GM12878 (cell line): ENCODE measurements at regions of chrX and their contacts with region 1.

Region 1: DNA sequence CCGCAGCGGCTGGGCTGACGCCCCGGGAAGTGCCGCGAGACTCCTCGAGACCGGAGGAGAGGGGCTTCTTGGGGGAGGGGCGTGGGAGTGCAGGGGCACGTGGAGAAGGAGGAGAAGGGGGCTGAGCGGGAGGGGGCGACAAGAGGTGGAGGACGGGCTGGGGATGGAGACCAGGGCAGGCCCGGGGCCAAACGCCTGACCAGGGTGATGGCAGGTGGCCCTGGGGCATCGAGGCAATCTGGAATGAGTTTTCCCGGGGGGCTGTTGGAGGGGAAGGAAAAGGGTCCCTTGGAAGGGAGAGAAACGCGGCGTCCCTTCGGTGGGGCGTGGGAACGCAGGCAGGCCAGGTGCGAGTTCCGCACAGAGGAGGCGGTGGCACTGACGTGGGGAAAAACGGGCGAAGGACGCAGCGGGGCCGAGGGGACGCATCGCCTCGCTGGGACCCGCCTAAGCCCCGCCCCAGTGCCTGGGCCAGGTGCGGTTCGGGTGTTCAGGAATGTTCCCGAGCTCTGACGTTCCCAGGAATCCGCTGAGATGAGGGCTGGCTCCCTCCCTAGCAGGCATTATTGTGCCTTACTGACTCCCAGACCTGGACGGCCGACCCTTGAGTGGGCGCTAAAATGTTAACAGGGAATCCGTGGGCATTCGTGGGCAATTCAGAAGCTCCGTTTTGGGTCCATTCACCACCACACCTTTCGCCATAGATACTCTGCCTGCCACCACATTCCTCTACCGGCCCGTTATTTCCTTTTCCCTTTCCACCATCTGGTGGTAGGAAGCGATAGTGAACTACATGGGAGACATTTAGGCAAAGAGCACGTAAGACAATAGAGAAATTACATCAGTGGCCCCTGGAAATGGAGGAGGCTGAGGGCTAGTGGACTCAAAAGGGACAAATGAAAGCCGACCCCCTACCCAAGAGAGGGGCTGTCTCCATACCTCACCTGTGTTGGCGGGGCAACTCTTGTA is 795 bp upstream of the SH3KBP1 start:
- DNase-seq: no peak
- ATAC-seq: peak; percentile 10
- H3K4me3 ChIP-seq: peak overlapping the region; percentile 58; the same call in 1 of the 2 replicates
- H3K27ac ChIP-seq: peak overlapping the region; percentile 69
- H3K4me1 ChIP-seq: peaks cover 9% of the 10 kb centered on the region; the same call in 1 of the 2 replicates
- H3K27me3 ChIP-seq: no peaks in the 10 kb centered on the region
- CTCF ChIP-seq: peak; percentile 15 to 60 (median 33); a peak in 4 of 6 replicates
- EP300 ChIP-seq: no peak
- POLR2A ChIP-seq: peak; percentile 54
- RAD21 ChIP-seq: peak; percentile 73

Region 2: GRCh38 chrX:19593690-19594089 is 294.5 kb before region 1 on chrX:
- CTCF ChIA-PET with region 1: interaction called, 4 read pairs
- POLR2A ChIA-PET with region 1: no interaction called
- RAD21 ChIA-PET with region 1: interaction called, 3 read pairs
- SMC1A ChIA-PET with region 1: interaction called, 4 read pairs
- in situ Hi-C with region 1: no loop called
- intact Hi-C with region 1: loop called (anchors 10 kb)
- DNase-seq: no peak
- ATAC-seq: peak; percentile 71
- H3K4me3 ChIP-seq: no peak overlapping the region
- H3K27ac ChIP-seq: no peak overlapping the region
- H3K4me1 ChIP-seq: no peaks in the 10 kb centered on the region
- H3K27me3 ChIP-seq: no peaks in the 10 kb centered on the region
- CTCF ChIP-seq: peak in 2 of 3 experiments; percentile 16 to 40; a peak in 4 of 6 replicates
- EP300 ChIP-seq: no peak
- POLR2A ChIP-seq: no peak
- RAD21 ChIP-seq: peak; percentile 62

Region 3: DNA sequence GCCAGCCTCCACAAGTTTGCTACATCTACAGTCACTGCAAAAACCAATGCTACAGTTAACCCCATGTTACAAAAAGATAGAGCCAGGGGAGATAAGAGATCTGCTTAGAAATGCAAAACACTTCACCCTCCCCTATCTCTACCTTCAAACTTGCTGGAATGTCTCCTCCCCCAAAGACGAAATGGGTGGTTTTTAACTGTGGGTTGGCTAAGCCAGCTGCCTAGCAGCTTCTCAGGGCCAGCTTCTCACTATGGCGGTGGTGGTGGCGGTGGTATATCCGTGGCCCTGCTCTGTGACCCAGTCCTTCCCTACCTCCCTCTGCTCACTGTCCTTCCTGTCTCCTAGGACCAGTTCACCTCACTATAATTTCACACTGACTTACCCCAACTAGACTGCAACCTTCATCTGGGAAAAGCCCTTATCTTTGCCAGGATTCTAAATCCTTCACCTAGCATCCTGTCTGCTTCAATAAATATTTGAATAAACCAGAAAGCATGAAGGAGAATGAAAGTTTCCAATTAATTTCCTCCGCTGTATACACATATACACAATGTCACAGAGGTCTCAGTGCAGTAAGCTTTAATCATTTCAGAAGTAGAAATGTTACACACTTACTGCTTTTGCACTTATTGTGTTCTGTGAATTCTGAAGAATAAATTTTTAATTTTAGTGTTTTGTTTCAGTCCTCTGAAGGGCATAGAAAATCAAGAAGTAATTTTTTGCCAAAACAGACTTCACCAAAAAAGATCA is 47.1 kb before region 1 on chrX:
- CTCF ChIA-PET with region 1: interaction called, 3 read pairs
- POLR2A ChIA-PET with region 1: interaction called, 6 read pairs
- RAD21 ChIA-PET with region 1: interaction called, 22 read pairs
- SMC1A ChIA-PET with region 1: interaction called, 14 read pairs
- in situ Hi-C with region 1: no loop called
- intact Hi-C with region 1: loop called (anchors 5 kb)
- DNase-seq: peak; percentile 64
- ATAC-seq: peak; percentile 74
- H3K4me3 ChIP-seq: no peak overlapping the region
- H3K27ac ChIP-seq: peak overlapping the region; percentile 81
- H3K4me1 ChIP-seq: peaks cover 30% of the 10 kb centered on the region
- H3K27me3 ChIP-seq: no peaks in the 10 kb centered on the region
- CTCF ChIP-seq: no peak
- EP300 ChIP-seq: 0 out of 4 replicates have a peak, but pooled peaks of 1 of the 2 experiments have one; percentile 10
- POLR2A ChIP-seq: peak; percentile 66
- RAD21 ChIP-seq: no peak

Region 4: GRCh38 chrX:19863212-19863856 is 24.9 kb before region 1 on chrX:
- CTCF ChIA-PET with region 1: interaction called, 4 read pairs
- POLR2A ChIA-PET with region 1: interaction called, 11 read pairs
- RAD21 ChIA-PET with region 1: interaction called, 26 read pairs
- SMC1A ChIA-PET with region 1: interaction called, 27 read pairs
- in situ Hi-C with region 1: no loop called
- intact Hi-C with region 1: loop called (anchors 1 kb)
- DNase-seq: peak; percentile 88
- ATAC-seq: peak; percentile 70
- H3K4me3 ChIP-seq: 0 out of 2 replicates have a peak overlapping the region, but pooled peaks have one; percentile 39
- H3K27ac ChIP-seq: peak overlapping the region; percentile 93
- H3K4me1 ChIP-seq: peaks cover 52% of the 10 kb centered on the region
- H3K27me3 ChIP-seq: no peaks in the 10 kb centered on the region
- CTCF ChIP-seq: no peak
- EP300 ChIP-seq: peak; percentile 35 to 69; a peak in 2 of 4 replicates
- POLR2A ChIP-seq: no peak
- RAD21 ChIP-seq: 0 out of 2 replicates have a peak, but pooled peaks have one; percentile 2

Region 5: DNA sequence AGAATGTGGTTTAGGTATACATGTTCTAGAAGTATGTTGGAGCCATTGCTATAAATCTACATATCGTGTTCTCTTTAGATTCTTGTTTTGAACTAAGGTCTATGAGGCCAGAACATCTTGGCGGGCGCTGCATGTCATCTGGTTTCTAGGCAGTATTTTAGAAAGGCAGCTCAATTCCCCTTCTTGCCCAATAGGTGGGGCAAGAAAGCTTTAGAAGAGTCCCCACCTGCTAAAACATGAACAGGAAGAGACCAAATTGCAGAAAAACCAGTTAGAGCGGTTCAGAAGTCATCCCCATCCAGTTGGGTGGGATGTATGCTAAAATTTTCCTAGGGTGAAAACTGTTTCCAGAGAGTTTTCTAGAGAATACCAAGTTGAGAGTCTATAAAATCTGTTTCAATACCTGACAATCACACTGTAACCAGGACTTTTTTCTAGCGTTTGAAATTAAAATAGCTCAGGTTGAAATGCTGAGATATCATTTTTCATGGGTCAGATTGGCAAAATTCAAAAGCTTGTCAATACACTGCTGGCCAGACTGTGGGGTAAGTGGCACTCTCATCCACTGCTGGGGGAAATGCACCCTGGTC is 16.7 kb after region 1 on chrX:
- CTCF ChIA-PET with region 1: interaction called, 10 read pairs
- POLR2A ChIA-PET with region 1: interaction called, 4 read pairs
- RAD21 ChIA-PET with region 1: interaction called, 5 read pairs
- SMC1A ChIA-PET with region 1: interaction called, 11 read pairs
- in situ Hi-C with region 1: no loop called
- intact Hi-C with region 1: no loop called
- DNase-seq: no peak
- ATAC-seq: peak; percentile 93
- H3K4me3 ChIP-seq: no peak overlapping the region
- H3K27ac ChIP-seq: no peak overlapping the region
- H3K4me1 ChIP-seq: no peaks in the 10 kb centered on the region; the same call in 1 of the 2 replicates
- H3K27me3 ChIP-seq: no peaks in the 10 kb centered on the region
- CTCF ChIP-seq: peak; percentile 79 to 84 (median 80)
- EP300 ChIP-seq: no peak
- POLR2A ChIP-seq: no peak
- RAD21 ChIP-seq: peak; percentile 88